CD8-positive, alpha-beta memory T cell (primary cell): ENCODE measurements at regions of chr3 and their contacts with region 1.

Region 1: GRCh38 chr3:46895204-46895660 is 17.7 kb downstream of the PTH1R start:
- DNase-seq: peak; percentile 59 to 83 (median 71)
- H3K4me3 ChIP-seq: no peak overlapping the region
- H3K4me3 Mint-ChIP-seq: peak overlapping the region in 1 of 7 donors; percentile 53
- H3K27ac ChIP-seq: no peak overlapping the region
- H3K27ac Mint-ChIP-seq: peak overlapping the region in 1 of 8 donors; percentile 48
- H3K4me1 ChIP-seq: no peaks in the 10 kb centered on the region
- H3K4me1 Mint-ChIP-seq: peaks cover 10 to 32% (median 14%) of the 10 kb centered on the region in 3 donors
- H3K27me3 ChIP-seq: peaks cover 20% of the 10 kb centered on the region
- H3K27me3 Mint-ChIP-seq: peaks cover 39 to 59% of the 10 kb centered on the region in 2 donors

Region 2: GRCh38 chr3:46701181-46701939 is 193.9 kb before region 1 on chr3 and contains the start of gene TMIE:
- CTCF ChIA-PET with region 1: interaction called, 10 read pairs
- POLR2A ChIA-PET with region 1: no interaction called
- DNase-seq: peak in 1 of 5 donors; percentile 34
- H3K4me3 ChIP-seq: no peak within 1 kb of the TSS
- H3K4me3 Mint-ChIP-seq: peak within 1 kb of the TSS in 1 of 7 donors; percentile 34
- H3K27ac ChIP-seq: no peak within 1 kb of the TSS
- H3K27ac Mint-ChIP-seq: no peak within 1 kb of the TSS
- H3K4me1 ChIP-seq: peaks cover 10% of the 10 kb centered on the region
- H3K4me1 Mint-ChIP-seq: peaks cover 0 to 8% (median 4%) of the 10 kb centered on the region in 3 donors
- H3K27me3 ChIP-seq: peaks cover 6% of the 10 kb centered on the region
- H3K27me3 Mint-ChIP-seq: peaks cover 8 to 11% of the 10 kb centered on the region in 2 donors
- total RNA-seq, gene TMIE: 0.16 TPM in 1 of 2 experiments, not detected in the other

Region 3: DNA sequence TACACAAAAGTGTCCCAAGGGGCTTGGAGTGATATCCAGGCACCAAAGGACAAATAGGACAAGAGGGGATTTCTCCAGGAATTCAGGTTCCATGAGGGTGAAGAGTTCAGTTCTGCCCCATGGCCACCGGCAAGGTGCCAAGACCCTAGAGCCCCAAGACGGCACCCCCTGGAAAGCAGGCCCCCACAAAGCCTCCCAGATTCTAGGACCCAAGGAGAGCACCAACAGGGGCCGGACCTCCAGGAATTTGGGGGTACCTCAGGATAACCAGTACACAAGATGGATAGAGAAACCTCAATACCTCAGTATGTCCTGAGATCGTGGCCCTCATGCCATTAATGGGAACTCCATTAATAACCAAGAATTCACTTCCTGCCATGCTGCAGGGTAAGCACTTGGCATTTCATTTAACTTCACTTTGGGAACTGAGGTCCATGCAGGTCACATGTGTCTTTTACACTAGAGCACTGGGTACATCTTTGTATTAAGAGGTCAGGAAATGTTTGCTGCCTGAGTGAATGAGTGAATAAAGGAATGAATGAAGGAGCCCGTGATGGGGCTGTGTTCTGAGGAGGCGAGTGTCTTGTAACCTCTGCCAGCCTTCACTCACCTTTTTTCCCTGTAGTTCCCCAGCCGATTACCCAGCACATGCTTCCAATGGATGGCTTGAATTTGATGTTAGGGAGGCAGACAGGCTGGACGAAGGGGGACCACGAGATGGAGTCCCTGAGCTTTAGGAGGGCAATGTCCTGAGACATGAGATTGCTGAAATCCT is 162.0 kb before region 1 on chr3:
- CTCF ChIA-PET with region 1: no interaction called
- POLR2A ChIA-PET with region 1: no interaction called
- DNase-seq: no peak
- H3K4me3 ChIP-seq: no peak overlapping the region
- H3K4me3 Mint-ChIP-seq: no peak overlapping the region
- H3K27ac ChIP-seq: no peak overlapping the region
- H3K27ac Mint-ChIP-seq: no peak overlapping the region
- H3K4me1 ChIP-seq: no peaks in the 10 kb centered on the region
- H3K4me1 Mint-ChIP-seq: no peaks in the 10 kb centered on the region
- H3K27me3 ChIP-seq: no peaks in the 10 kb centered on the region
- H3K27me3 Mint-ChIP-seq: peaks cover 7 to 22% of the 10 kb centered on the region in 2 donors

Region 4: GRCh38 chr3:46759239-46760167 is 135.7 kb before region 1 on chr3:
- CTCF ChIA-PET with region 1: no interaction called
- POLR2A ChIA-PET with region 1: no interaction called
- DNase-seq: no peak
- H3K4me3 ChIP-seq: no peak overlapping the region
- H3K4me3 Mint-ChIP-seq: no peak overlapping the region
- H3K27ac ChIP-seq: no peak overlapping the region
- H3K27ac Mint-ChIP-seq: no peak overlapping the region
- H3K4me1 ChIP-seq: no peaks in the 10 kb centered on the region
- H3K4me1 Mint-ChIP-seq: no peaks in the 10 kb centered on the region
- H3K27me3 ChIP-seq: no peaks in the 10 kb centered on the region
- H3K27me3 Mint-ChIP-seq: peaks cover 18 to 36% of the 10 kb centered on the region in 2 donors